ENCODE measurements at regions of chrX and their contacts with region 1.

Region 1: DNA sequence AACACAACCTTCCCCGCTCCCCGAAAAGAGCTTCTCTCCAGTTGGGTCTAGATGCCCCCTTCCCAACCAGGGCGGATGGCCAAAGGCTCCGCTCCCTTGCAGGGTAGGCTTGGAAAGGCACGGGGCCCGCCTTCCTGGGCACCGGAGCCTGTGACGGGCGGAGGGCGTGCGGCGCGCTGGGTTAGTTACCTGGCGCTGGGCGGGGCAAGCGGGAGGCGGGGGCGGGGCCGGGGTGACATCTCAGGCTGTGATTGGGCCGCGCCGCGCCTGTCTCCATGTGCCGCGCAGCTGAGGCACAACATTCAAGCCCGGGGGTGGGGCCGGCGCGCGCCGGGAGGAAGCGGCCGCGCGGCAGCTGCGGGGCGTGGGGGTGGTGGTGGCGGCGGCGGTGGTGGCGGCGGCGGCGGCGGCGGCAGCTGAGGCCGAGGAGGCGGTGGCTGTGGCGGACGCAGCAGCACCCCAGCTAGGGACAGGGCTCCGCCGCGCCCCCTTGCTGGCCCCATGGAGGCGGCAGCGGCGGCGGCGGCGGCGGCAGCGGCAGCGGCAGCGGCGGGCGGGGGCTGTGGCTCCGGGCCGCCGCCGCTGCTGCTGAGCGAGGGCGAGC is at the start of gene REPS2:
- H3K4me3 Mint-ChIP-seq: peak within 1 kb of the TSS; percentile 94
- H3K27ac Mint-ChIP-seq: peak within 1 kb of the TSS; percentile 82
- H3K4me1 Mint-ChIP-seq: peaks cover 5% of the 10 kb centered on the region
- H3K27me3 Mint-ChIP-seq: peaks cover 5% of the 10 kb centered on the region

Region 2: DNA sequence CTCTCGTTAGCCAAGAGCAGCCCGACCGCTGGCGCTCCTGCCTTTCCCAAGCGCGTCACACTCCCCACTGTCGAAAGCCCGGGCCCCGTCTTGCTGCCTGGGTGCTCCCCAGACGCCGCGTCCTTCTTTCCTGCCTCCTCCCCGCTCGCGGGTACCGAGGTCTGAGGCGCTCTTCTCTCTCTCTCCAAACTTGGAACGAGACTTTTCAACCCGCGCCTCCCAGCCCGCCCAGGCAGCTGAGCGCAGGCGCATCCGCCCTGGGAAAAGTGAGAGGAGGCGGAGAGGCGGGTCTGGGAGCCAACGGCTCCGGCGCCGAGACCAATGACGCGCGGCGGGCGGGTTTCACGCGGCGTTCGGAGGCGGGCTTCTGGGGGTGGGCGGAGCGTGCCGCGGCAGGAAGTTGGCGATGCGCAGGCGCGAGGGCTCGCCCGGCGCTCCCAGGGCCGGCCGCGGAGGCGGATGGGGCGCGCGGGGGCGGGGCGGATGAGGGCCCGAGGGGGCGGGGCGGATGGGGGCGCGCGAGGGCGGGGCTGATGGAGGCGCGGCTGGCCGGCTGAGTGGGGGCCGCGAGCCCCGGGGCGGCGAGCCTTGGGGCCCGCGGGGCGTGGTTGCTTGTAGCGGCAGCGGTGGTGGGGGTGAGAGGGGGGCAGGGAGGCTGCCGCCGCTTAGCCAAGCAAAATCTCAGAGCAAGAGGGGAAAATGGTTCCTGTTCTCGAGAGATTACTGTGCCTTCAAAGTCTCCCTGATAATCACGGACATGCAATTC is 76.2 kb before region 1 on chrX and contains the start of gene RBBP7:
- intact Hi-C with region 1: loop called (anchors 5 kb)
- H3K4me3 Mint-ChIP-seq: peak within 1 kb of the TSS; percentile 98
- H3K27ac Mint-ChIP-seq: peak within 1 kb of the TSS; percentile 98
- H3K4me1 Mint-ChIP-seq: peaks cover 22% of the 10 kb centered on the region
- H3K27me3 Mint-ChIP-seq: no peaks in the 10 kb centered on the region

Region 3: DNA sequence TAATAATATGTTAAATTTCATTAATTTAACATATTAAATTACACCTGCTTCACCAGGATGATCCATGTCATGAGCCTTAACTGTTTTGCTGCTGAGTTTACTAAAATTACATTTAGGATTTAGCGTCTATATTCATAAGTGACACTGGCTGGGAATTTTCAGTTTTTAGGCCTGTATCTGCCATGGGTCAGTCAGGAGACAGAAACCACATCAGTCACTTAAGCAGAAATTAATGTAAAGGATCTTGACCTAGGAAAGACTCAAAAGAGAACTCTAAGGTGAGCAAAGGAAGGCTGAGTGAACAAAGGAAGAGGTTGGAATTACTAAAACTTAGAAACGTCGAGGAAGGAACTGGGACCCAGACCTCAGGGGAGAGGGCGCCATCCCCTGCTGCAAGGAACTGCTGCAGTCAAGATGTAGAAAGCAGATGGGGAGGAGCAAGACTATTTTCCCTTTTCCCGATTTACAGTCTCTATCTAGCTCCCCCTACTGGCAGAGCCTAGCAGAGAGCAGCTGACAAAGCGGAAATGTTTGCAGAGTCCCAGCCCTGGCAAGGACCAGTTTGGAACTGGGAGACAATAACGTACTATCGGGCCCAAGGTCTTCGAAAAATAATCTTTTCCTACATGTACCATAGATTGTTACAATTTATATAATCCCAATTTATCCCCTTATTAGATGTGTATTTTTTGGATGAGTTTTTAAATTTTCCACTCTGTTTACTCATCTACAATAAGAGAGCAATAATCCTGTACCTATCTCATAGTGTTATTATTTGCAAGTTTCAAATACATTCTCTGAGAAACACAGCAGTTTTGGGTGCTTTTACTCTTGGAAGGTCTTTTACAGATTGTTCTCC is 53.7 kb before region 1 on chrX:
- intact Hi-C with region 1: loop called (anchors 10 kb)
- H3K4me3 Mint-ChIP-seq: no peak overlapping the region
- H3K27ac Mint-ChIP-seq: no peak overlapping the region
- H3K4me1 Mint-ChIP-seq: peaks cover 15% of the 10 kb centered on the region
- H3K27me3 Mint-ChIP-seq: no peaks in the 10 kb centered on the region

Region 4: DNA sequence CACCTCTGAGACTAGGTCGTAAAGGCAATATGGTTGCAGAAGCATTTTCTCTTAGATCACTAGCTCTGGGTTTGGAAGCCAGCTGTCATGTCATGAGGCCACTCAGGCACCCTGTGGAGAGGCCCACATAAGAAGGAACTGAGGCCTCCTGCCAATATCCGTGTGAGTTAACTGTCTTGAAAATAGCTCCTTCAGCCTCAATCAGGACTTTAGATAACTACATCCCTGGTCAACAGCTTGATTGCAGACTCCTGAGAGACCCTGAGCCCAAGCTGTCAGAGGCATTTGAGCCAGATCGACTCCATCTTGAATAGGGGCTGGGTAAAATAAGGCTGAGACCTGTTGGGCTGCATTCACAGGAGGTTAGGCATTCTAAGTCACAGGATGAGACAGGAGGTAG is 15.1 kb before region 1 on chrX:
- intact Hi-C with region 1: no loop called
- H3K4me3 Mint-ChIP-seq: no peak overlapping the region
- H3K27ac Mint-ChIP-seq: no peak overlapping the region
- H3K4me1 Mint-ChIP-seq: peaks cover 4% of the 10 kb centered on the region
- H3K27me3 Mint-ChIP-seq: no peaks in the 10 kb centered on the region

Region 5: DNA sequence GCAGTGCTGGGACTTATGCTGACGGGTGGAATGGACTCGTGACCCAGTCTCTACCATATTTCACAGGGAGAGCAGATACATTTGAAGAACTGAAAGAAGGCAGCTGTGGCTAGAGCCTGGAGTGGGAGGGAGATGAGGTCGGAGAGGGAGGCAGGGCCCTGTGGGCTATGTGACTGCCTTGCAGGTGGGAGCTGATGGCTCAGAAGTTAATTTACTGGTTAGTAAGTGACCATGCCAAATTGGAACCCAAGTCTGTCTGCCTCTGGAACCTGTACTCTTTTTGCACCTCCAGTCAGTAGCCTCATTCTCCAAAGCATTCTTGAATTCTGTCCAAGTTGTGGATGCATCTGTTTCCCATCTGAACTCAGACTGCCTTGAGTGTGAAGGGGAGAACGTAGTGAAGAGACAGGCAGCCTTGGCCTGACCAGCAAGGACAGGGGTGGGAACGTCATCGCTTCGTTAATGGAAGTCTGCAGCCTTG is 92.3 kb after region 1 on chrX:
- intact Hi-C with region 1: loop called (anchors 5 kb)
- H3K4me3 Mint-ChIP-seq: no peak overlapping the region
- H3K27ac Mint-ChIP-seq: peak overlapping the region; percentile 81
- H3K4me1 Mint-ChIP-seq: peaks cover 34% of the 10 kb centered on the region
- H3K27me3 Mint-ChIP-seq: no peaks in the 10 kb centered on the region